ENCODE measurements at regions of chr5 and their contacts with region 1.

Region 1: GRCh38 chr5:107449369-107449768 is 221.4 kb downstream of the EFNA5 start:
- DNase-seq: peak; percentile 65
- H3K4me3 ChIP-seq: peak overlapping the region; percentile 35
- H3K27ac ChIP-seq: peak overlapping the region; percentile 63
- H3K4me1 ChIP-seq: peaks cover 48% of the 10 kb centered on the region
- CTCF ChIP-seq: no peak

Region 2: GRCh38 chr5:107025712-107026497 is 423.5 kb before region 1 on chr5:
- CTCF ChIA-PET with region 1: no interaction called
- POLR2A ChIA-PET with region 1: no interaction called
- intact Hi-C with region 1: no loop called
- DNase-seq: no peak
- H3K4me3 ChIP-seq: no peak overlapping the region
- H3K27ac ChIP-seq: no peak overlapping the region
- H3K4me1 ChIP-seq: no peaks in the 10 kb centered on the region
- CTCF ChIP-seq: no peak

Region 3: DNA sequence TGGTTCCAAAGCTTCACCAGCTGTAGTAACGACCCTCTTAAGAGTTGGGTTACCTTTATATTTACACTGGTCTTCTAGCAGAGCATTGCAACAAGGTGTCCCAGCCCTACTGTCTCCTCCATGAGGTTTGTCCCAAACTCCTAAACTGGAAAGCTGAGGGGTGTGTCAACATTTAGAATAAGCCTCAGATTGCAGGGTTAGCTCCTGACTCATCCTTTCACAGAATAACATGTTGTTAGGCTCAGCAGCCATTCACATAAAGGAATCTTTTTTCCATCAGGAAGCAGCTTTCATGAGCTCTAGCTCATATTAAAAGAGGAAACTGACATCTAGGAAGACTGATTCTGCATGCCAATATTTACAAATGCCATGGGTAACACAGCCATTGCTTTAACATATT is 17.4 kb before region 1 on chr5:
- CTCF ChIA-PET with region 1: no interaction called
- POLR2A ChIA-PET with region 1: interaction called, 12 read pairs
- intact Hi-C with region 1: no loop called
- DNase-seq: no peak
- H3K4me3 ChIP-seq: peak overlapping the region; percentile 27
- H3K27ac ChIP-seq: no peak overlapping the region
- H3K4me1 ChIP-seq: peaks cover 41% of the 10 kb centered on the region
- CTCF ChIP-seq: no peak

Region 4: GRCh38 chr5:107640568-107640967 is 191.2 kb after region 1 on chr5:
- CTCF ChIA-PET with region 1: no interaction called
- POLR2A ChIA-PET with region 1: no interaction called
- intact Hi-C with region 1: no loop called
- DNase-seq: no peak
- H3K4me3 ChIP-seq: no peak overlapping the region
- H3K27ac ChIP-seq: no peak overlapping the region
- H3K4me1 ChIP-seq: no peaks in the 10 kb centered on the region
- CTCF ChIP-seq: no peak